ENCODE measurements at regions of chr12 and their contacts with region 1.

Region 1: GRCh38 chr12:24728366-24728765 is 220.5 kb downstream of the BCAT1 start:
- DNase-seq: no peak
- ATAC-seq: no peak
- H3K4me3 Mint-ChIP-seq: no peak overlapping the region
- H3K27ac Mint-ChIP-seq: peak overlapping the region; percentile 37
- H3K4me1 Mint-ChIP-seq: peaks cover 53% of the 10 kb centered on the region
- H3K27me3 Mint-ChIP-seq: no peaks in the 10 kb centered on the region

Region 2: GRCh38 chr12:24600996-24601395 is 127.4 kb before region 1 on chr12:
- CTCF ChIA-PET with region 1: interaction called, 3 read pairs
- POLR2A ChIA-PET with region 1: interaction called, 4 read pairs
- intact Hi-C with region 1: loop called (anchors 2 kb)
- DNase-seq: peak; percentile 18
- ATAC-seq: peak; percentile 78
- H3K4me3 Mint-ChIP-seq: no peak overlapping the region
- H3K27ac Mint-ChIP-seq: no peak overlapping the region
- H3K4me1 Mint-ChIP-seq: peaks cover 13% of the 10 kb centered on the region
- H3K27me3 Mint-ChIP-seq: peaks cover 4% of the 10 kb centered on the region

Region 3: DNA sequence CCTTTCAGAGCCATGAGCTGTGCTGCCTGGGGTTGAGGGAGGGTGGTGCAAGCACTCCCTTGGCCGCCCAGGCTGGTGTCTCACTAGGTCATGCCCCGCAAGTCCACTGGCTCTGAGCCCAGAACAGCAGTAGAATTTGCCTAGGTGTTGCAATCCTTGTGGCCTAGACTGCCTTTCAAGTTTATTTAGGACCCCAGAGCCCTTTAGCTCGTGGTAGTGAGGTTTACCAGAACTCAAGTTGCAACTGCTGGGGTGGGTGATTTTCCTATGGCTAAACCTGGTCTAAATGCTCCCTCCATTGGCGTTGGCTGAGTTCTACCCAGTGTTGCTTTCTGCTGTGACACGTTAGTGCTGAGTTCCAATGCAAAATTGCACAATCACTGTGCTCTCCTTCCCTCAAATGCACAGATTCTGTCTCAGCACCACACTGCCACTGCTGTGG is 66.7 kb before region 1 on chr12:
- CTCF ChIA-PET with region 1: no interaction called
- POLR2A ChIA-PET with region 1: no interaction called
- intact Hi-C with region 1: no loop called
- DNase-seq: no peak
- ATAC-seq: no peak
- H3K4me3 Mint-ChIP-seq: no peak overlapping the region
- H3K27ac Mint-ChIP-seq: no peak overlapping the region
- H3K4me1 Mint-ChIP-seq: no peaks in the 10 kb centered on the region
- H3K27me3 Mint-ChIP-seq: peaks cover 2% of the 10 kb centered on the region

Region 4: GRCh38 chr12:24742378-24742777 is 14.0 kb after region 1 on chr12:
- CTCF ChIA-PET with region 1: no interaction called
- POLR2A ChIA-PET with region 1: no interaction called
- intact Hi-C with region 1: loop called in 1 of 2 experiments (anchors 1 kb)
- DNase-seq: peak; percentile 63
- ATAC-seq: peak; percentile 83
- H3K4me3 Mint-ChIP-seq: no peak overlapping the region
- H3K27ac Mint-ChIP-seq: peak overlapping the region; percentile 32
- H3K4me1 Mint-ChIP-seq: peaks cover 25% of the 10 kb centered on the region
- H3K27me3 Mint-ChIP-seq: no peaks in the 10 kb centered on the region

Region 5: DNA sequence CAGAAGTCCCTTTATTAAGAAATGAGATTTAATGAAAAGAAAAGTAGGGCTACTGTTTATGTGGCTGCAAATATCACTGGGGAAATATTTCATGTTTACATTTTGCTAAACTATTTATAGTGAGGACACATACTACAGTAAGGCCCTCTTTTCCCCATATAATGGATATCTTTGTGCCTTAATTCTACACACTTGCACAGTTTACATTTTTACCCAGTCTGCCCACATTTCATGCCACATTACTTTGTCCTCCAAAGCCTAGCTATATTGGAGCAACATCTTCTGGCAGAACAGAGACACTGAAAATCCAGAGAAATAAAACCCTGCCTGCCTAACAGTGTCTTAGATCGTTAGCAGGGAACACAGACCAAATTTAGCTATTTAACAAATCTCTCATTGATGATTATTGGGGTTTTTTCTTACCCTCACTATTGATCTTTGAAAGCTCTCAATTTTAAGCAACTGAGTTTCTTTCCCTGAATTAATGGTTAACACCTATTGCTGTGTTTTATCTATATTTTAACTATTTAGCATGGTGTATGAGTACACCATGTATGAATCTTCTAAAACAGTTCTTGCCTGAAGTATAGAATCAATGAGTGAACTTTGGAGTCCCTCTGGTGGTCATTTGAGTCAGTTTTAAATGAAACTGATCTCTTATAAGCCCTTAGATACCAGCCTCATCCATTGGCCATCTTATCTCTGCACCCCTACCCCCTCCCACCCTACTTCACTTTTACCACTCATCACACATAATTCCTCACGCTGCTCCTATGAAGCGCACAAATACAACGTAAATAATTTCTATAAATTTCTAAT is 50.3 kb after region 1 on chr12:
- CTCF ChIA-PET with region 1: interaction called, 6 read pairs
- POLR2A ChIA-PET with region 1: no interaction called
- intact Hi-C with region 1: loop called (anchors 2 to 5 kb)
- DNase-seq: no peak
- ATAC-seq: peak; percentile 85
- H3K4me3 Mint-ChIP-seq: no peak overlapping the region
- H3K27ac Mint-ChIP-seq: no peak overlapping the region
- H3K4me1 Mint-ChIP-seq: peaks cover 3% of the 10 kb centered on the region
- H3K27me3 Mint-ChIP-seq: peaks cover 5% of the 10 kb centered on the region

Region 6: GRCh38 chr12:24948757-24949722 is 220.7 kb after region 1 on chr12 and contains the start of gene BCAT1:
- CTCF ChIA-PET with region 1: interaction called, 5 read pairs
- POLR2A ChIA-PET with region 1: interaction called, 3 read pairs
- intact Hi-C with region 1: loop called in 1 of 2 experiments (anchors 10 kb)
- DNase-seq: peak; percentile 71
- ATAC-seq: peak; percentile 45
- H3K4me3 Mint-ChIP-seq: peak within 1 kb of the TSS; percentile 74
- H3K27ac Mint-ChIP-seq: peak within 1 kb of the TSS; percentile 91
- H3K4me1 Mint-ChIP-seq: peaks cover 57% of the 10 kb centered on the region
- H3K27me3 Mint-ChIP-seq: peaks cover 49% of the 10 kb centered on the region
- total RNA-seq, gene BCAT1: 27.9 to 40.0 TPM

Measured in activated CD4-positive, alpha-beta T cell treated with anti-CD3 and anti-CD28 coated beads for 36 hours (primary cell).